ENCODE measurements at regions of chr14 and their contacts with region 1.

Region 1: GRCh38 chr14:52402812-52403526 is 88.9 kb downstream of the PTGER2 start:
- DNase-seq: peak; percentile 77
- H3K4me3 Mint-ChIP-seq: no peak overlapping the region
- H3K27ac Mint-ChIP-seq: no peak overlapping the region
- H3K4me1 Mint-ChIP-seq: peaks cover 50% of the 10 kb centered on the region
- H3K27me3 Mint-ChIP-seq: peaks cover 4% of the 10 kb centered on the region

Region 2: DNA sequence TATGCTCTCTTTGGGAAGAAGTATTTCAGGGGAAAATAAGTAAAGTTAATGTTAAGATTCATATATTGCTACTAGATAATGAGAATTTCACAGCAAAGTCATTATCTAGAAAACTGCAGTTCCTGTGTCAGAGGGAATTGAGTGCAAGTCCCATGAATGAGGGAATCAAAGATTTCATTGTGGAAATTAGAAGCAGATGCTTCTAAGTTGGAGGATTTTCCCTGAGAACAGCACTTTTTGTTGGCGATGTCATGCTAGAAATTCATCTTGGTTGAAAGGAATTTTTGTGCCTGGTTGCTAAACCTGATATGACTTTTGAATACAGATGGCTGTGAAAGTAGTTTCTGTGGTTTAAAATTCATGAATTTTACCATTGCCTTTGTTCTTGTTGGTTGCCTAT is 725.7 kb before region 1 on chr14:
- CTCF ChIA-PET with region 1: no interaction called
- intact Hi-C with region 1: loop called (anchors 1 kb)
- DNase-seq: no peak
- H3K4me3 Mint-ChIP-seq: no peak overlapping the region
- H3K27ac Mint-ChIP-seq: no peak overlapping the region
- H3K4me1 Mint-ChIP-seq: peaks cover 21% of the 10 kb centered on the region
- H3K27me3 Mint-ChIP-seq: peaks cover 8% of the 10 kb centered on the region

Region 3: GRCh38 chr14:52189330-52189729 is 213.6 kb before region 1 on chr14:
- CTCF ChIA-PET with region 1: no interaction called
- intact Hi-C with region 1: loop called (anchors 2 kb)
- DNase-seq: no peak
- H3K4me3 Mint-ChIP-seq: no peak overlapping the region
- H3K27ac Mint-ChIP-seq: no peak overlapping the region
- H3K4me1 Mint-ChIP-seq: peaks cover 12% of the 10 kb centered on the region
- H3K27me3 Mint-ChIP-seq: no peaks in the 10 kb centered on the region

Region 4: DNA sequence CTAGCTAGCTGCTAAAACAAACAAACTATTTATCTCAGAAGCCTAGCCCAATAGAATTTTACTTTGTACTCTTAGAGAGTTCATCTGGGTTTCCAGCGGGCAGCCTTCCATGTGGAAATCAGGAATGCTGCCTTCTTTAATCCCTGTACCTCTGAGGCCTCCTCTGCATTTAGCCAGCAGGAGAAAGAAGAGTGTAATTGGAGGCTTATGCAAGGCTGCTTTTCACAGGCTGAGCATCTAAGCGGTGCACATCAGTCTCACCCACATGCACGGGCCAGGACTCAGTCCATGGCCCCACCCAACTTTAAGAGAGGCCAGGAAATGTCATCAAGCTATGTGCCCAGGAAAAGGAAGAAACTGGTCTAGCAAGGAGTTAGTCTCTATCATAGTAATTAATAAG is 149.5 kb before region 1 on chr14:
- CTCF ChIA-PET with region 1: no interaction called
- intact Hi-C with region 1: no loop called
- DNase-seq: no peak
- H3K4me3 Mint-ChIP-seq: no peak overlapping the region
- H3K27ac Mint-ChIP-seq: no peak overlapping the region
- H3K4me1 Mint-ChIP-seq: peaks cover 1% of the 10 kb centered on the region
- H3K27me3 Mint-ChIP-seq: peaks cover 6% of the 10 kb centered on the region

Region 5: DNA sequence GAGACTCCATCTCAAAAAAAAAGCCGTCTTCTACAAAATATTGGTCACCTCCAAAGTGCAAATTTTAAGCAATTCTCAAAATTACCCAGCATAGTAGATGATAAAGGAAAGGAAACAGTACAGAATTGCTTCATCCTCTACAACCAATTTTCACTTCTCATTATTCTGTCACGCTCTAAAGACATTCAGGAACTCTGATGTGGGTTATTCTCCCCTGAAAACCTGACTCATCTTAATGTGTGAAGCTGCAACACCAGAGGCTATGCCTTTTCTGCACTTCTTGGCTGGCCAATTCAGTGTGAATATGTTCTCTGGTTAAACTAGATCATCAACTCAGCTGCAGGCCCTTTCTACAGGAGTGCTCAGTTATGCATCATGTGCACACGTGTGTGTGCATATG is 77.8 kb before region 1 on chr14:
- CTCF ChIA-PET with region 1: interaction called, 4 read pairs
- intact Hi-C with region 1: loop called (anchors 1 kb)
- DNase-seq: peak; percentile 52
- H3K4me3 Mint-ChIP-seq: no peak overlapping the region
- H3K27ac Mint-ChIP-seq: peak overlapping the region; percentile 7
- H3K4me1 Mint-ChIP-seq: peaks cover 47% of the 10 kb centered on the region
- H3K27me3 Mint-ChIP-seq: no peaks in the 10 kb centered on the region

Region 6: GRCh38 chr14:52413729-52414408 is 10.9 kb after region 1 on chr14:
- CTCF ChIA-PET with region 1: interaction called, 4 read pairs
- intact Hi-C with region 1: loop called (anchors 1 kb)
- DNase-seq: no peak
- H3K4me3 Mint-ChIP-seq: peak overlapping the region; percentile 14
- H3K27ac Mint-ChIP-seq: peak overlapping the region; percentile 85
- H3K4me1 Mint-ChIP-seq: peaks cover 39% of the 10 kb centered on the region
- H3K27me3 Mint-ChIP-seq: no peaks in the 10 kb centered on the region

Region 7: GRCh38 chr14:52485350-52485960 is 82.5 kb after region 1 on chr14:
- CTCF ChIA-PET with region 1: no interaction called
- intact Hi-C with region 1: no loop called
- DNase-seq: no peak
- H3K4me3 Mint-ChIP-seq: no peak overlapping the region
- H3K27ac Mint-ChIP-seq: no peak overlapping the region
- H3K4me1 Mint-ChIP-seq: no peaks in the 10 kb centered on the region
- H3K27me3 Mint-ChIP-seq: no peaks in the 10 kb centered on the region

Region 8: DNA sequence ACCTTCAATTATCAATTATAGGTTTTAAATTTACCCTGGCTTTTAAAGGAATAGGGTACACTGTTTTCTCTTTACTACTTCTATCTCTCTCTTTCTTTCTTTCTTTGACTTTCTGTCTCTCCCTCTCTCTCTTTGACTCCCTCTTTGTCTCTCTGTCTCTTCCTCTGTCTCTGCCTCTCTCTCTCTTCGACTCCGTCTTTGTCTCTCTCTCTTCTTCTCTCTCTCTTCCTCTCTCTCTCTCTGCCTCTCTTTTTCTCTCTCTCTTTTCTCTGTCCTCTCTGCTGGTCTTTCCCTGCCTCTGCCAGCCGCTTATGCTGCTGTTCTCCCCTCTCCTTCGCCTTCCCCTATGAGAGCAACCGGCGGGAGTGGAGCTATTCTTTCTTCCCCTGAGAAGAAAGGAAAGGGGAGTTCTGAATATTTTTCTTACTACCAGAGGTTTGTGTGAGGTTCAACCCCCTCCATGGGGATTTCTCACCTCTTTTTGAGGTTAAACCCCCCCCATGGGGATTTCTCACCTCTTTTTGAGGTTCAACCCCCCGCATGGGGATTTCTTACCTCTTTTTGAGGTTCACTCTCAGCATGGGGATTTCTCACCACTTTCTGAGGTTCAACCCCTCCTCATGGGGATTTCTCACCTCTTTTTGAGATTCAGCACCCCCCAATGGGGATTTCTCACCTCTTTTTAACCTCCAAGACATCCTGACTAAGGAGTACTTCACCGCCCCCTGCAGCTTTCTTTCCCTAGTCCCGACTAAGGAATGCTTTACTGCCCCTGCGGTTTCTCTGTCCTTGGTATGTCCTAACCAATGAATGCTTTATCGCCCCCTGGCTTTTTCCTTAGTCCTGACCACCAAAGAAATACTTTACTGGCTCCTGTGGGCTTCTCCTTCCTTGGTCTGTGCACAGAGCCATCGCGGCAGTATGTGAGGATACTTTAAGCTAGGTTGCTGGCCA is 777.6 kb after region 1 on chr14:
- CTCF ChIA-PET with region 1: no interaction called
- intact Hi-C with region 1: loop called (anchors 5 kb)
- DNase-seq: peak; percentile 86
- H3K4me3 Mint-ChIP-seq: no peak overlapping the region
- H3K27ac Mint-ChIP-seq: peak overlapping the region; percentile 43
- H3K4me1 Mint-ChIP-seq: peaks cover 21% of the 10 kb centered on the region
- H3K27me3 Mint-ChIP-seq: no peaks in the 10 kb centered on the region